Adrenal gland (tissue), 19 donors: ENCODE measurements at regions of chr2 and their contacts with region 1.

Region 1: DNA sequence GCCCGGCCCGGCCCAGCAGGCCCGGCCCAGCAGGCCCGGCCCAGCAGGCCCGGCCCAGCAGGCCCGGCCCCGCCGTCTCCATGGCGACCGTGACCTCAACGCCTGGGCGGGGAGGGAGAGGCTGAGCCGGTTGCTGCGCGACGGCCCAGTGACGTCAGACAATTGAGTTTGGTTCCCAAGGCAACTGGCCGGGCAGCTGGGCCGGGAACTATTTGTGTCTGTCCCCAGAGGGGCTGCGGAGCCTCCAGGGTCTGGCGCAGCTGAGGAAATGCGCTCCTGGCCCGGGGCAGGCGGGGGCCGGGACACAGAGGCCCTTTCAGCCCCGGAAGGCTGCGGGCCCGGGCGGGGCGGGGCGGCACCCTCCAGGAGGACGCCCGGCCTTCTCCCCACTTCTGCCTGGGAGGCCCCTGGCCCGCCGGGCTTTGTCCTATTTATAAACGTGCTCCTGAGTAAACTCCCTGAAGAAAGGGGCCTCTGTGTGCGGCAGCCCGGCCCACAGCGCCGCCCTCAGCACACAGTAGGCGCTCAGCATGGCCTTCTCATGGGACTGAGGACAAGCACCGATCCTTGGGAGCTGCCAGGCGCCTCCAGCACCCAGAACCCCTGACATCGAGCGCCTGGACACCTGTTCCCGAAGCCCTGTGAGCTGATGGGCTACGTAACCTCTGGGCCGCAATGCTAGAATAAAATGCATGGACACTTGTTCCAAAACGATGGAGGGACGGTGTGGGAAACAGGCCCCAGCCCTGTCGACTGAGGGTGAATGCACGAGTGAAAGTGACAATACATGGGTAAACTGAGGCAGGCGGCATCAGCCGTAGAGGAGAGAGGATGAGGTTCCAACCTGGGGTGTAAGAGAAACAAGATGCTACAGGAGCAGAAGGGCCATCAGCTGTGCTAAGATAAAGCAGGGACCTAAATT is 12.3 kb downstream of the TEX44 start:
- DNase-seq: peak; percentile 99 to 100 (median 100)
- H3K4me3 ChIP-seq: peak overlapping the region in 1 of 4 donors; percentile 62
- H3K27ac ChIP-seq: peak overlapping the region; percentile 84 to 99 (median 96)
- H3K4me1 ChIP-seq: peaks cover 13 to 23% of the 10 kb centered on the region in 2 donors
- H3K27me3 ChIP-seq: no peaks in the 10 kb centered on the region
- CTCF ChIP-seq: peak in 1 of 6 experiments; percentile 3
- POLR2A ChIP-seq: peak; percentile 61 to 66

Region 2: GRCh38 chr2:231503766-231504165 is 101.2 kb before region 1 on chr2:
- intact Hi-C with region 1: no loop called
- DNase-seq: no peak
- H3K4me3 ChIP-seq: no peak overlapping the region
- H3K27ac ChIP-seq: no peak overlapping the region
- H3K4me1 ChIP-seq: no peaks in the 10 kb centered on the region
- H3K27me3 ChIP-seq: no peaks in the 10 kb centered on the region
- CTCF ChIP-seq: no peak
- POLR2A ChIP-seq: no peak

Region 3: GRCh38 chr2:231563378-231563961 is 41.5 kb before region 1 on chr2:
- intact Hi-C with region 1: loop called (anchors 5 kb)
- DNase-seq: peak; percentile 38 to 67 (median 64)
- H3K4me3 ChIP-seq: no peak overlapping the region
- H3K27ac ChIP-seq: no peak overlapping the region
- H3K4me1 ChIP-seq: no peaks in the 10 kb centered on the region
- H3K27me3 ChIP-seq: no peaks in the 10 kb centered on the region
- CTCF ChIP-seq: peak; percentile 37 to 66 (median 54)
- POLR2A ChIP-seq: no peak

Region 4: GRCh38 chr2:231583982-231584381 is 21.0 kb before region 1 on chr2:
- intact Hi-C with region 1: no loop called
- DNase-seq: no peak
- H3K4me3 ChIP-seq: no peak overlapping the region
- H3K27ac ChIP-seq: no peak overlapping the region
- H3K4me1 ChIP-seq: no peaks in the 10 kb centered on the region
- H3K27me3 ChIP-seq: no peaks in the 10 kb centered on the region
- CTCF ChIP-seq: no peak
- POLR2A ChIP-seq: no peak

Region 5: GRCh38 chr2:232030229-232030628 is 425.3 kb after region 1 on chr2:
- intact Hi-C with region 1: no loop called
- DNase-seq: no peak
- H3K4me3 ChIP-seq: no peak overlapping the region
- H3K27ac ChIP-seq: no peak overlapping the region
- H3K4me1 ChIP-seq: peaks cover 0 to 7% of the 10 kb centered on the region in 2 donors
- H3K27me3 ChIP-seq: no peaks in the 10 kb centered on the region
- CTCF ChIP-seq: peak in 4 of 6 experiments; percentile 20 to 29 (median 22)
- POLR2A ChIP-seq: no peak